H1 (cell line): ENCODE measurements at regions of chr5 and their contacts with region 1.

Region 1: DNA sequence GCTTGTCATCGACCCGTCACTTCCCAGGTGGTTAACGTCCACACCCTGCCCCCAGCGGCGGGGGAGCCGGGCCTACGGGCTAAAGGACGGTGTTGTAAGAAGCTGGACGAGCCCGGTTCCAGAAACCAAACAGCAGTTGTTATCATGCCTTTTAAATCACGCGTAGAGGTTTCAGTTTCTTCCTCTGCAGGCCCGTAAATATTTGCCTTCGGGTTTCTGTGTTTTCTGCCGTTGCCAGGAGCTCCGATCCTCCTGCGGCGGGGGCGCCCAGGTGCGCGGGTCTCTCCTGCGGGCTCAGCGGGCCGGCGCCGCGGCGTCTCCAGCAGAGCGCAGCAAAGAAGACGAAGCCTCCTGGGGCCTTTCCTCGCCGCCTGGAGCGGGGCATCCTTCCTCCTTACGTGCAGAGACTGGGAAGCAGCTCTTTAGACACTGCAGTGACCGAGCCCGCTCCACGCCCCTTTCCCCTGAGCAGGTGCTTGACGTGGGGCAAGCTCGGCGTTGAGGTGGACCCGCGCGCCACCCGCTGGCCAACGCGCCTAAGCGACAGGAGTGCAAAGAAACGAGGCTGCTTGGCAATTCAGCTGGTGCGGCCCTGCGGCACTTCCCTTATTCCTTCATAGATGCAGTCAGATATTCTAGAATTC is 21.8 kb upstream of the TTC1 start:
- DNase-seq: peak; percentile 65 to 89
- H3K4me3 ChIP-seq: peak overlapping the region; percentile 9 to 62 (median 52)
- H3K27ac ChIP-seq: no peak overlapping the region
- H3K4me1 ChIP-seq: peaks cover 0 to 2% (median 0%) of the 10 kb centered on the region in 4 experiments; a peak in 1 of 7 replicates
- H3K27me3 ChIP-seq: peaks cover 4 to 15% (median 12%) of the 10 kb centered on the region in 4 experiments; a peak in 6 of 7 replicates
- CTCF ChIP-seq: peak; percentile 78 to 84 (median 79)
- EP300 ChIP-seq: peak in 1 of 2 experiments; percentile 71; a peak in 1 of 3 replicates
- POLR2A ChIP-seq: no peak
- RAD21 ChIP-seq: peak; percentile 87 to 91

Region 2: GRCh38 chr5:159286420-159287035 is 700.6 kb before region 1 on chr5:
- CTCF ChIA-PET with region 1: interaction called, 14 read pairs
- POLR2A ChIA-PET with region 1: no interaction called
- DNase-seq: no peak
- H3K4me3 ChIP-seq: no peak overlapping the region
- H3K27ac ChIP-seq: no peak overlapping the region
- H3K4me1 ChIP-seq: no peaks in the 10 kb centered on the region
- H3K27me3 ChIP-seq: no peaks in the 10 kb centered on the region
- CTCF ChIP-seq: peak in 2 of 3 experiments; percentile 35 to 43; a peak in 2 of 4 replicates
- EP300 ChIP-seq: no peak
- POLR2A ChIP-seq: no peak
- RAD21 ChIP-seq: peak; percentile 80 to 81

Region 3: GRCh38 chr5:159915904-159916840 is 71.0 kb before region 1 on chr5 and contains the start of gene ADRA1B:
- CTCF ChIA-PET with region 1: interaction called, 20 read pairs
- POLR2A ChIA-PET with region 1: no interaction called
- DNase-seq: peak; percentile 38 to 81
- H3K4me3 ChIP-seq: peak within 1 kb of the TSS; percentile 38 to 73 (median 58)
- H3K27ac ChIP-seq: no peak within 1 kb of the TSS
- H3K4me1 ChIP-seq: no peaks in the 10 kb centered on the region; a peak in 2 of 7 replicates
- H3K27me3 ChIP-seq: peaks cover 6 to 34% (median 25%) of the 10 kb centered on the region in 4 experiments
- CTCF ChIP-seq: peak; percentile 57 to 70 (median 67)
- EP300 ChIP-seq: no peak
- POLR2A ChIP-seq: no peak
- RAD21 ChIP-seq: peak; percentile 80 to 87
- total RNA-seq, gene ADRA1B: not detected in 2 replicates

Region 4: DNA sequence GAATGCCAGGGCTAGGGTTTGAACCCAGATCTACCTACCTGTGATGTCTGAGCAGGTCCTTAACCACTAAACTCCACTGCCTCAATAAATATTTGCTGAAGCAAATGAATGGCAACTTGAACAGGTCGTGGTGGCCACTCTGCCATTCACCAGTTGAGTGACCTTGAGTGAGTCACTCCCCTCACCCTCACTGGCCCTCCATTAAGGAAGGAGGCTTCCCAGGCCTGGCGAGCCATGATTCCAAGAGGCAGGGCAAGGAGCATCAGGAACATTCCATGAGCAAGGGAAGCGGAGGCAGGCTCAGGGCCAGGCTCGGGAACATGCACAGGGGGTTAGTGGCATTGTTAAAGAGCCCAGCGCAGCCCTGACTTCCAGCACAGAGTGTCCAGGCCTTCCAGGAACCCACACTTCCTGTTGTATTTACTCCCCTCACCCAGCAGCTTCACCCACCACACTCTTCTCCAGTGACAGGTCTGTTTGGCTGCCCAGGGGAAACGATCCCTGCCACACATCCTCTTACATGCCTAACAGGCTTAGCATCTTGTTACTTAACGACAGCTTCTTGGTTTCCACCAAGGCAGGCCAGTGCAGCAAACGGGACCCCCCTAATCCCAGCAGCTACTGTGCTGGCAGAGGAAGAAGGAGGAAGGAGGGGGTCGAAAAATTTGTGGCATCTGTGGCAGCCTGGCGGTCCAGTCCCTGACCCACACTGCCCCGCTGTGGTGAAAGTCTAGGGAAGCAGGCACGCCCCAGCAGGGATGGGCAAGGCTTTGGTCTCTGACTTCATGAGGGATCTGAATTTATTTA is 21.9 kb before region 1 on chr5:
- CTCF ChIA-PET with region 1: interaction called, 18 read pairs
- POLR2A ChIA-PET with region 1: no interaction called
- DNase-seq: peak in 1 of 2 experiments; percentile 85
- H3K4me3 ChIP-seq: no peak overlapping the region
- H3K27ac ChIP-seq: no peak overlapping the region
- H3K4me1 ChIP-seq: no peaks in the 10 kb centered on the region
- H3K27me3 ChIP-seq: peaks cover under 1 to 2% (median under 1%) of the 10 kb centered on the region in 4 experiments; a peak in 4 of 7 replicates
- CTCF ChIP-seq: peak; percentile 73 to 89 (median 78)
- EP300 ChIP-seq: no peak
- POLR2A ChIP-seq: no peak
- RAD21 ChIP-seq: peak; percentile 88 to 92

Region 5: GRCh38 chr5:159975462-159976019 is 11.6 kb before region 1 on chr5:
- CTCF ChIA-PET with region 1: interaction called, 39 read pairs
- POLR2A ChIA-PET with region 1: interaction called, 4 read pairs
- DNase-seq: no peak
- H3K4me3 ChIP-seq: no peak overlapping the region
- H3K27ac ChIP-seq: no peak overlapping the region
- H3K4me1 ChIP-seq: peaks cover 0 to 4% (median 2%) of the 10 kb centered on the region in 4 experiments; a peak in 2 of 7 replicates
- H3K27me3 ChIP-seq: peaks cover 23 to 38% (median 35%) of the 10 kb centered on the region in 4 experiments
- CTCF ChIP-seq: no peak
- EP300 ChIP-seq: no peak
- POLR2A ChIP-seq: no peak
- RAD21 ChIP-seq: peak in 1 of 2 experiments; percentile 30; a peak in 2 of 4 replicates

Region 6: DNA sequence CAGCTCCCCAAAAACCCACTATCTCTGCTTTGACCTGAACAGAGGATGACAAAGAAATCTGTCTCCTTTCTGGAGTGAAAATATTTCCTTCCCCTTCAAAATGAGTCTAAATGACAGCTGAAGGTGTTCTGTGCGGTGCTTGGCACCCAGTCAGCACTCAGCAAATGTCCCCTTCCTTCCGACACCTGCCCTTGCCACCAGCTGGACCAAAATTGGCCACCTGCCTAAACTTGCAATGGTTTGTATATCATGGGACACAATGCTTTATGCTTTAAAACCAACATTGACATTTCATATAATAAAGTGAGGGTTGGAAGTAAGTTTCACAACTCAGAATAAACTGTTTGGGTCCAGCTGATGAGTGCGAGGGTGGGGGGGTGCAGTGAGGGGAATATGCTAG is 14.3 kb after region 1 on chr5:
- CTCF ChIA-PET with region 1: interaction called, 14 read pairs
- POLR2A ChIA-PET with region 1: interaction called, 3 read pairs
- DNase-seq: no peak
- H3K4me3 ChIP-seq: no peak overlapping the region
- H3K27ac ChIP-seq: no peak overlapping the region
- H3K4me1 ChIP-seq: no peaks in the 10 kb centered on the region
- H3K27me3 ChIP-seq: no peaks in the 10 kb centered on the region
- CTCF ChIP-seq: no peak
- EP300 ChIP-seq: no peak
- POLR2A ChIP-seq: no peak
- RAD21 ChIP-seq: no peak

Region 7: GRCh38 chr5:160071516-160071915 is 84.4 kb after region 1 on chr5:
- CTCF ChIA-PET with region 1: no interaction called
- POLR2A ChIA-PET with region 1: no interaction called
- DNase-seq: no peak
- H3K4me3 ChIP-seq: no peak overlapping the region
- H3K27ac ChIP-seq: no peak overlapping the region
- H3K4me1 ChIP-seq: peaks cover 0 to 4% (median 0%) of the 10 kb centered on the region in 4 experiments; a peak in 3 of 7 replicates
- H3K27me3 ChIP-seq: no peaks in the 10 kb centered on the region
- CTCF ChIP-seq: no peak
- EP300 ChIP-seq: no peak
- POLR2A ChIP-seq: no peak
- RAD21 ChIP-seq: no peak